ENCODE measurements at regions of chr4 and their contacts with region 1.

Region 1: DNA sequence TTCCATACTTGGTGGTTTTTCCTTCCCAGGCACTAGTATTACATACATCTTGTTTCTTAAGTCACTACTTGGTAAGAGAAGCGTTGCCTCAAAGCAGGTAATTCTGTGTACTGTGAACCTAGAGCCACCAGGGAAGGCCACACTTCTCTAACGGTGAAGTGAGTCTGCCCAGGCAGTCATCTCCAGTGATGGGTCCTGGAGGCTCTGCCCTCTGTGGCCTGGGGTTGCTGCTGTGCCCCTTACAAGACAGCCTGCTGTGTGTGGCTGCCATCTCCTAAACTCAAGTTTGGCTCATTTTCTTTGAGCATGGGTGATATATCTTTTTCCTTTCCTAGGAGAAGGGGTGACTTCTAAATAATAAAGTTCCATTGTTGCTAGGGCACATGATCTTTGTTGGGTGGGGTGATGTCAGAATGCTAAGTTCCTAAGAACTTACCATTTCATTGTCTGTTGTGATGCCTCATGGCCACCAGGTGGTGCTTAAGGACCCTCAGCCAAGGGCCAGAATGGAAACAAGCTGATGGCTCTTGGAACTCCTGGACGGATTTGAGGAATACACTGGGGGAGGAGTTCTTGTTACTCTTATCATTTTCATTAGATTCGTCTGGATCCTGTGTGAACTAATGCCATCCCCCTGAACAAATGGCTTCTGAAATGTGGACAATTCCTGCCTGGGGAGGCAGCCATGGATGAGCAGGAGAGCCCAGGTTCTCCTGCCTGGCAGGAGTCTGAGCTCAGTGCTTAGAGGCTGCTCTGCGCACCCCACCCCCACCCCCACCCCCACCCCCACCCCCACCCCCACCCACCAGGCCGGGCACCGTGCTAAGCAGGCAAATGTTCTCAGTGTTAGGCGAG is 41.1 kb upstream of the WDR1 start:
- DNase-seq: no peak
- H3K4me3 ChIP-seq: no peak overlapping the region
- H3K27ac ChIP-seq: no peak overlapping the region
- H3K4me1 ChIP-seq: peaks cover 0 to 12% (median 0%) of the 10 kb centered on the region in 3 donors
- H3K27me3 ChIP-seq: peaks cover 0 to 22% (median 0%) of the 10 kb centered on the region in 4 donors
- CTCF ChIP-seq: peak; percentile 43 to 82 (median 74)
- POLR2A ChIP-seq: no peak

Region 2: GRCh38 chr4:10554694-10555093 is 397.0 kb after region 1 on chr4:
- intact Hi-C with region 1: loop called (anchors 10 kb)
- DNase-seq: no peak
- H3K4me3 ChIP-seq: no peak overlapping the region
- H3K27ac ChIP-seq: no peak overlapping the region
- H3K4me1 ChIP-seq: peaks cover 0 to 4% (median 0%) of the 10 kb centered on the region in 3 donors
- H3K27me3 ChIP-seq: peaks cover 0 to 15% (median 0%) of the 10 kb centered on the region in 4 donors
- CTCF ChIP-seq: peak; percentile 42 to 82 (median 72)
- POLR2A ChIP-seq: no peak

Measured in esophagus squamous epithelium (tissue), 5 donors.